Left cardiac atrium (tissue), 4 donors: ENCODE measurements at regions of chr22 and their contacts with region 1.

Region 1: GRCh38 chr22:31148953-31149627 is 8.8 kb upstream of the PLA2G3 start:
- DNase-seq: peak; percentile 82
- ATAC-seq: peak; percentile 97

Region 2: DNA sequence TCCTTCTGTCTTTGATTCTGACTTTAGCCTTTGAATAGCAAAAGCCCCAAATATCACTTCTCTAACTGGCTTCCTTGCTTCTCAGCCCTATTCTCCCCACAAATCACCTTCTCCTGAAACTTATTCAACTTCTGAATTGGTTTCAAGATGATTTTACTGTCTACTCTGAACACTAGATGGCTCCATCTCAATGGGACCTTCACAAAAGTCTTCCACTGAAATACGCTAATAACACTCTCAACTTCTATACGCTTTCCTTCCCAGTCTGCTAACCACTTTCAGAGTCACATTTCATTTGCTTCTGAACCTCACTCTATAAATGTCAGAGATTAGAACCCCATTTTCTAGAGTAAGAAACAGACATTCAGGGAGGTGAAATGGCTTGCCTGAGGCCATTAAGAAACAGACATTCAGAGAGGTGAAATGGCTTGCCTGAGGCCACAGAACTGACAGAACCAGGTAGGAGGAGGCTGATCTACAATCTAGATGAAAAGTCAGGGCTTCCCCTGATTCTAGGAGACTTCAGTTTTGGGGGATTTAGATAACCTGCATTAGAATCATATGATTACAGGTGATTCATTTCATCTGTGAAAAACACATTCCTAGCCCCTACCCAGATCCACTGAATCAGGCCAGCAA is 201.2 kb before region 1 on chr22:
- intact Hi-C with region 1: loop called (anchors 2 to 10 kb)
- DNase-seq: no peak
- ATAC-seq: peak; percentile 56 to 64

Region 3: DNA sequence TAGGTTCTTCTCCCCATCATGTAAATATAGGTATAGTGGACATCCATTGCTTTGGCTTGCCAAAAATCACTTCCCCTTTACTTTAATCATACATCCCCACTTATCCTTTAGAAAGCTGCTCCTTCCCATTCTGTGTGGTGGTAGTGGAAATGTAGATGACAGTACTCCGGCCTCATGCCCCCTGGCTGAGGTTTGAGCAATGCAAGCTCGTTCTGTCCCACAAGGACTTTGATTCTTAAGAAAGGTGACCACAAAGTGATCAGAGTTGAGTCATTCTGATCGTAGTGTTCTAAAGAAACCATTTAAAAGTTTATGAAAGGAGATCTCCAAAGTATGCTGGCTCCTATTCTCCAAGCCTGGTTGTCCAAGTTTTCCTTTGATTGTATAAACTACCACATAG is 169.2 kb before region 1 on chr22:
- intact Hi-C with region 1: no loop called
- DNase-seq: no peak
- ATAC-seq: no peak

Region 4: GRCh38 chr22:31089160-31090100 is 59.7 kb before region 1 on chr22:
- intact Hi-C with region 1: loop called (anchors 5 to 10 kb)
- DNase-seq: no peak
- ATAC-seq: peak in 1 of 2 donors; percentile 13

Region 5: DNA sequence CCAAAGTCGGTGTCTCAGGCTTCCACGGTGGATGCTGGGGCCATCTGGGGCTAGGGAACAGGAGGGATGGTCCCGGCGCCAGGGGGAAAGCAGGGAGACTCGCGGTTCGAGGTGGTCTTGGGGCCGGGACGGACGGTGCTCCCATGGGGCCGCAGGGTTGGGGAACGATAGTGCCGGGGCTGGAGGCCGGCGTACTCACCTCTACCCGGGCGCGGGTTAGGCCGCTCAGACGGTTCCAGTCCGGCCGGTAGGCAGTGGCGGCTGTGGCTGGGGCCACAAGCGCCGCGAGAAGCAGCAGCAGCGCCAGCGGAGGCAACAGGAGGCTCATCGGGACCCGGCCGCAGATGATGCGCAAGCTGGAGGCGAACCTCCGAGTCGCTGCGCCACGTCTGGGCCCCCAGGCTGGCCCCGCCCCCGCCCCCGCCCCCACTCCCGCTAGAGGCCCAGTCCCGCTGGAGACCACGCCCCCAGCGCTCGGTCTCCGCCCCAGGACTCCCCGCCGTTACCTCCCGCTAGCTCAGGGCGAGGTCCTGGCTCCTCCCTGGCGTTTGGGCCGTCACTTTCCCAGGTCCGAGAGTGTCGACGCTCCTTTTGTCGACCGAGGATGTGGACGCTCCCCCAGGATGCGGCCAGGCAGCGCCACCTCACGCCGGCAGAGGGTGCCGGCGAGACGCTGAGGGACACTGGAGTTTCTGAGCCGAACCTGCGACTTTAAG is 41.8 kb before region 1 on chr22 and contains the start of gene SELENOM:
- intact Hi-C with region 1: loop called (anchors 1 to 5 kb)
- DNase-seq: peak; percentile 97
- ATAC-seq: peak; percentile 94 to 95
- total RNA-seq, gene SELENOM: 118 to 145 TPM

Region 6: DNA sequence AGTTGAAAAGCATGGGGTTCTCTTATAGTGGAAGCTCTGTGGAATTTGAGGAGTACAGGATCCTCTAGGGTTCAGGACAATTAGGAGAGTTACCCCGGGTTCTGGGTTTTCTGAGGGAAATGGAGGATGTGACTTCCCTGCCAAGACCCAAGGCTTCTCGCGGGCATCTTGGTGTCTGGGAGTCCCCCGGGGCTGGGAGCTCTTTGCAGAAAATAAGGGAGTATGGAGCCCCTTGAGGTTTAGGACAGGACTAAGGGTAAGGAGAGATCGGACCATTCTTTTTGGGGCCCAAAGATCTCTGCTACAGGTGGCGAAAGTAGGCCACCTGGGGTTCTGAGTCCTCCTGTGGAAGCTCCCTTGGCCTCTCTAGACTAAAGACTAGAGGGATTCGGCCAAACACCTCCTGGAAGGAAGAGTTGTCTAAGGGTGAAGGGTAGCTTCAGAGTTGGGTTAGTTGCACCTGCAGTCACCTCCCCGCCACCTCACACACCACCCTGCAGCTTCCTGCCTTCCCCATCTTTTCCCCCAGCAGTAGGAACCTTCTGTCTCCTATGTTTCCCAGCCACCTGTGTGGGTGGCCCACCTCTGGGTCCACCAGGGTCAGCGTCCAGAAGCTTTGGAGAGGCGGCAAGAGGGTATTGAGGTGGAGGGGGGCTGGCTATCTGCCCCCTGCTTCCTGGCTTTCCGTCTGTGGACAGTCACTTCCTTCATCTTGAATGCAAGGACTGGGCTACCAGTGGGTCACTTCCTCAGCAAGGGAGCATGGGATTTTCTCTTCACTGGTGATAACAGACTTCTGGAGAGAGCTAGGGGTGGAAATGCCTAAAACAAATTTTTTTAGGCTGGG is 63.9 kb after region 1 on chr22:
- intact Hi-C with region 1: no loop called
- DNase-seq: no peak
- ATAC-seq: no peak

Region 7: GRCh38 chr22:31602259-31602952 is 453.3 kb after region 1 on chr22:
- intact Hi-C with region 1: no loop called
- DNase-seq: peak; percentile 52
- ATAC-seq: peak; percentile 93 to 94